Ascending aorta (tissue), 2 donors: ENCODE measurements at regions of chr5 and their contacts with region 1.

Region 1: GRCh38 chr5:141878711-141879425 is 658 bp upstream of the PCDH1 start:
- DNase-seq: peak; percentile 72 to 94
- H3K4me3 ChIP-seq: peak overlapping the region; percentile 70 to 77
- H3K27ac ChIP-seq: peak overlapping the region; percentile 28 to 58
- H3K4me1 ChIP-seq: peaks cover 13 to 28% of the 10 kb centered on the region in 2 donors
- H3K27me3 ChIP-seq: peaks cover 17% of the 10 kb centered on the region
- CTCF ChIP-seq: peak; percentile 90 to 94 (median 93)

Region 2: DNA sequence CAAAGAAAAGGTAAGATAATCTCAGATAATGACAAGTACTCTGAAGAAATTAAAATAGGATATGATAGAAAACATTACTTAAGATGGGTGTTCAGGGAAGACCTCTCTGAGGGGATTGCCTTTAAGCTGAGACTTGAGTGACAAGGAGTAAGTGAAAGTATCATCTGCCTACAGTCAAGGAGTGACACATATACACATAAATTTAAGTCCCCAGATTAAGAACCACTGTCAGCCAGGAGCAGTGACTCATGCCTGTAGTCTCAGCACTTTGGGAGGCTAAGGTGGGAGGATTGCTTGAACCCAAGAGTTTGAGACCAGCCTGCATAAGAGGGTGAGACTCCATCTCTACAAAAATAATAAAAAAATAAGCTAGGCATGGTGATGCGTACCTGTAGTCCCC is 1496.9 kb before region 1 on chr5:
- intact Hi-C with region 1: no loop called
- DNase-seq: no peak
- H3K4me3 ChIP-seq: no peak overlapping the region
- H3K27ac ChIP-seq: no peak overlapping the region
- H3K4me1 ChIP-seq: no peaks in the 10 kb centered on the region
- H3K27me3 ChIP-seq: no peaks in the 10 kb centered on the region
- CTCF ChIP-seq: no peak

Region 3: DNA sequence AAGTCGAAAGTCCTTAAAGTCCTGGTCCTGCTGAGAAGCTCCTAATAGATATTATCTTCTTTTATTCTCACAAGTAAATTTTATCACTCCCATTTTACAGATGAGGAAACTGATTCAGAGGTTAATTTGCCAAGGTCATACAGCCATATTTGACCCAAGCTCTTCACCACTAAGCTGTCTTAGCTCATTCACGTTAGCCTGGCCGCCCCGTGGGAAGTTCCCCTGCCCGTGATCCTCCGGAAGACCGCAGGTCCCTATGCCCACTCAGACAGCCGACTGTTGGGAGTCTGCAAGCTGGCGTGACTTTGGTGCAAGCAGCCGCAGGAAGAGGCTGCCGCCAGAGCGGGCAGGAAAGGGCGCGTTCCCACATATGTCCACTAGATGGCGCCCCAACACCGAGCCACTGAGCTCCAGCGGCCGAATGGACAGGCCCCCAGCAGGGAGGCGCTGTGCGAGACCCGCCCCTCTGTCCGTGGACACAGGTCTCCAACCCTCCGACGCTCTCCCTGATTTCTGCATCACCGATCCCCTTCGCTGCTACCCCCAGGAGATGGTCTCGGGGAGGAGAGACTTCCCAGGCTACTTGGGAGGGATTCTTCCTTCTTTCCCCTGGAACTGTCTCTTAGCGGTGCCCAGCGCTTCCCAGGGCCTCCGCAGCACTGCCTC is 186.9 kb before region 1 on chr5:
- intact Hi-C with region 1: loop called (anchors 1 kb)
- DNase-seq: peak in 1 of 2 donors; percentile 87
- H3K4me3 ChIP-seq: peak overlapping the region in 1 of 2 donors; percentile 41
- H3K27ac ChIP-seq: no peak overlapping the region
- H3K4me1 ChIP-seq: no peaks in the 10 kb centered on the region
- H3K27me3 ChIP-seq: no peaks in the 10 kb centered on the region
- CTCF ChIP-seq: peak; percentile 88 to 99 (median 96)

Region 4: GRCh38 chr5:141701360-141702119 is 177.3 kb before region 1 on chr5:
- intact Hi-C with region 1: loop called (anchors 1 kb)
- DNase-seq: no peak
- H3K4me3 ChIP-seq: peak overlapping the region; percentile 58 to 62
- H3K27ac ChIP-seq: no peak overlapping the region
- H3K4me1 ChIP-seq: peaks cover 3 to 13% of the 10 kb centered on the region in 2 donors
- H3K27me3 ChIP-seq: peaks cover 15% of the 10 kb centered on the region
- CTCF ChIP-seq: no peak

Region 5: GRCh38 chr5:141799507-141800167 is 79.2 kb before region 1 on chr5:
- intact Hi-C with region 1: no loop called
- DNase-seq: no peak
- H3K4me3 ChIP-seq: no peak overlapping the region
- H3K27ac ChIP-seq: no peak overlapping the region
- H3K4me1 ChIP-seq: no peaks in the 10 kb centered on the region
- H3K27me3 ChIP-seq: no peaks in the 10 kb centered on the region
- CTCF ChIP-seq: no peak

Region 6: DNA sequence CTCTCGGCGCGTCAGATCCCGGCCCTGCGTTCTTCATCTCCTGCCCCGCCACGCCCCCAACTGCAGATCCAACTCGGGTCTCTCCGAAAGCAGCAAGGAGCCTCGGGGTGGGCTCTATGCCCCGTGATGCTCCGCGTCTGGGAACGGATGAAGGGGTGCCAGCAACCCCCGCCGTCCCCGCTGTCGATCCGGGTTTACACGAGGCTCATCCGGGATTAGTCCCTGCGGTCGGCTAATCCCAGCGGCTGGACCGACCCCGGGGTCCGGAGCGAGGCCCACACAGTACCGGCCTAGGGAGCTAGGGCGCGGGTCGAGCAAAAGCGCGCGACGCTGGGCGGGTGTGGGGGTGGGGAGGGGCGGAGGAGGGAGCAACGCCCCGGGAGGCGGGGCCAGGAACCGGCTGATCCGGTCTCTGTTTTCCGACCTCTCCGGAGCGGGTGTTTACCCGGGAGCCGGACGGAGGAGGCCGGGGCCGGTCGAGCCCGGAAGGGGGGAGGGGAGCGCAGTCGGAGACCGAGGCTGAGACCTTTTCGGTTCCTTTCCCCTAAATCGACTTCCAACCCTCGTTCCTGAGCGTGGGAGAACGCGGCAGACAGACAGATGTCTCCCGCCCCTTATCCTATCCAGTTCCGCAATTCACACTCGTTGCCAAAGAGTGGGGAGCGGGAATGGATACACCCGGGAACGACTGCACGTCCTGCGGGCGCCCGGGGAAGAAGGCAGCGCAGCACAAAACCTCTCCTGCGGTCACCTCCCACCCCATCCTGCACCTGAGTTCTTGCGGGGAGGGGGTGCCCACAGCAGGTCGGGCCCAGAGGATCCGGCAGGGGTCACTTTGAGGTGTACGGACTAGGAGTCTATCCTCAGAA is 29.3 kb before region 1 on chr5:
- intact Hi-C with region 1: loop called (anchors 2 kb)
- DNase-seq: peak; percentile 30 to 88
- H3K4me3 ChIP-seq: peak overlapping the region; percentile 74 to 89
- H3K27ac ChIP-seq: peak overlapping the region; percentile 85 to 88
- H3K4me1 ChIP-seq: peaks cover 0 to 8% of the 10 kb centered on the region in 2 donors
- H3K27me3 ChIP-seq: no peaks in the 10 kb centered on the region
- CTCF ChIP-seq: no peak

Region 7: DNA sequence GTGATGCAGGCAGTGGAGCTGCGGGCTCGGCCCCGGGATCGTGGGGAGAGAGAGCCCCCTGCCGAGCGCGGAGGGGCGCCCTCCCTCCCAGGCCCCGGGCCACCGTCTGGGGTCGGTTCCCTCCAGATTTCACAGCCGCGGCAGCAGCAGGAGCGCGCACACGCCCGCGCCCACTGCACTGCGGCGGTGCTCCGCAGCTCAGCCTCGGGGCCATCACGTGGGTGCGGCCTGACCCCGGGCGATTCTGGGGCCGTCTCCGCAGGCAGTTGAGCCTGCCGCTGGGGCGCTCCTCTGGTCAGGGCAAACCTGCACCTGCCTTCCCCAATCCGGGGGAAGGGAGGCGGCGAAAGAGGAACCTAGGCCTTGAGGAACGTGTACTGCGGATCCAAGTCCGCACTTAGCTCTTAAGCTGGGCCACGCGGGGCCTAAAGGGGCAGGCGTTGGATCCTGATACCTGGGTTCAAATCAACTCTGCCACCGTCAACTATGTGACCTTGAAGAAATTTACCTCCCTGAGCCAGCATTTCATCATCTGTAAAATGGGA is 35.4 kb after region 1 on chr5:
- intact Hi-C with region 1: no loop called
- DNase-seq: peak in 1 of 2 donors; percentile 19
- H3K4me3 ChIP-seq: peak overlapping the region; percentile 49 to 61
- H3K27ac ChIP-seq: no peak overlapping the region
- H3K4me1 ChIP-seq: peaks cover 5 to 7% of the 10 kb centered on the region in 2 donors
- H3K27me3 ChIP-seq: no peaks in the 10 kb centered on the region
- CTCF ChIP-seq: peak in 1 of 3 experiments; percentile 35

Region 8: GRCh38 chr5:142167458-142167857 is 288.6 kb after region 1 on chr5:
- intact Hi-C with region 1: no loop called
- DNase-seq: no peak
- H3K4me3 ChIP-seq: no peak overlapping the region
- H3K27ac ChIP-seq: no peak overlapping the region
- H3K4me1 ChIP-seq: no peaks in the 10 kb centered on the region
- H3K27me3 ChIP-seq: no peaks in the 10 kb centered on the region
- CTCF ChIP-seq: no peak